ENCODE measurements at regions of chr1 and their contacts with region 1.

Region 1: DNA sequence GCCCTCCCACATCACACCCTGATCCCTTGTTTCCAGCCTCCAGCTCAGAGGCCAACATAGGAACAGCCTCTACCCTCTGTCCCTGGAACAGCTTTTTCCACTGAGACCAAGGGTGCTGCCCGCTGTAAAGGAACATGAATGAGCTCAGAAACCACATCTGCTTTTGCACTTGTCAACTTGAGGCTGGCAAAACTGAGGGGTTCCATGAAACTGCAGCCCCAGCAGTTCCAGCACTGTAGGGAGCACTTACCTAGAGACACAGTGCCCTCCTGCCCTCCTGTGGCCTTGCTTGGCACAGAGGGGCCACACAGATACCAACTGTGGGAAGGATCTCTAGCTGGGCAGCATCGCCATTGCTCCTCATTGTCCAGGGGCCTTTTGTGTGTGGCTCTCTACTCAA is 51.7 kb downstream of the ITPKB start:
- DNase-seq: peak; percentile 74
- H3K4me3 Mint-ChIP-seq: peak overlapping the region; percentile 27
- H3K27ac Mint-ChIP-seq: peak overlapping the region; percentile 100
- H3K4me1 Mint-ChIP-seq: peaks cover 100% of the 10 kb centered on the region
- H3K27me3 Mint-ChIP-seq: no peaks in the 10 kb centered on the region

Region 2: DNA sequence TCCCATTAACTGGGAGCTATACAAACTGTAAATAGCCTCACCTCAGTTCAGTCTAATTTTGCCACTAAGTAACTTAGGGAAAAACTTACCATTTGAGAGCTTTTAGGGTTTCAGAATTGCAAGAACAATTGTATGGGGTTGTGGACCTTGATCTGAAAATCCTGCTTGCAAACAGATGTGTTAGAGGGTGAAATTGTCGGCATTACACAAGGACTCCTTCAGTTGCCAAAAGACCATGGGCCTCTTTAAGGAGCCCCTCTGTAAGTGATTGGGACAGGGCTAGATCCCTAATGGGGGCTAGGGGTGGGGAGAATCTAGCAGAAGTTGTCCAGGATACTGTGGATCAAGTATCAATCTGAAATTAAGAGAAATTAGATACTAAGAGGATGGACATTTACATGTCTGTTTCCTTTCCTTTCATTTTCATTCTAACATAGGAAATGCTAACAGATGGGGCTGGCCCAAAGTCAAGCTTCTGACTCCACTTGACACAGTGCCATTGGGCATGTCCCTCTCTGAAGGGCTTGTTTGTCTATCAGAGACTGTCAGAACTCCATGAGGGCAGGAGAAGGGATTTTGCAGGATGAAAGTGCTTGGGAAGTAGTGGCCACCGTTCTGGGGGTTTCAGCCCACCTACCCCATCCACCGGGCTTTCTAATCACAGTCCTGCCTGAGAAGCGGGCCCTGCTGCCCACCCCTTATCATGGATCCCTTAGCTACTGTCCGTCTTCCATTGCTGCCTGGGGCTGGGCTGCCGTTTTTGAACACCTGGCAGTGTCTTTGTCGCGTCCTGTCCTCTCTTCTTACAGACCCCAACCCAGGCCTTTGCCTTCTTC is 84.2 kb before region 1 on chr1:
- CTCF ChIA-PET with region 1: no interaction called
- intact Hi-C with region 1: no loop called
- DNase-seq: peak; percentile 30
- H3K4me3 Mint-ChIP-seq: no peak overlapping the region
- H3K27ac Mint-ChIP-seq: no peak overlapping the region
- H3K4me1 Mint-ChIP-seq: no peaks in the 10 kb centered on the region
- H3K27me3 Mint-ChIP-seq: no peaks in the 10 kb centered on the region

Region 3: DNA sequence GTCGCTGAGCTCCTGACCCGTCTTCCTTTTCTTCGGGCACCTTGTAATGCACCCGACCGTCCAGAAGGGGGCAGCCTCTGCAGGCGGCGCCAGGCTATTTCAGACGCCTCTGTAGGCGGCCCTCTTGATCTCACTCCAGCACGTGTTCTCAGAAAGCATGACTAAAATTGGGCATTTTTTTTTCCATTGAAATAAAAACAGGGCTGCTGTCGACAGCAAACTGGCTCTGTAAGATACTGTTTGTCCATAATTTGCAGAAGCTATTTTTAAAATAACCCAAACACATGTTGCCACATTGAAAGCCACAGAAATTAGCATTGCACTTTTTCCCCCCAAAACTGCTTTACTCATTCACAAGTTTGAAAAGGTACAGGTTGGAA is 60.9 kb before region 1 on chr1:
- CTCF ChIA-PET with region 1: interaction called, 7 read pairs
- intact Hi-C with region 1: loop called (anchors 1 kb)
- DNase-seq: peak; percentile 90
- H3K4me3 Mint-ChIP-seq: peak overlapping the region; percentile 10
- H3K27ac Mint-ChIP-seq: peak overlapping the region; percentile 68
- H3K4me1 Mint-ChIP-seq: peaks cover 25% of the 10 kb centered on the region
- H3K27me3 Mint-ChIP-seq: no peaks in the 10 kb centered on the region

Region 4: GRCh38 chr1:226642876-226643576 is 44.4 kb before region 1 on chr1:
- CTCF ChIA-PET with region 1: interaction called, 11 read pairs
- intact Hi-C with region 1: no loop called
- DNase-seq: peak; percentile 80
- H3K4me3 Mint-ChIP-seq: peak overlapping the region; percentile 40
- H3K27ac Mint-ChIP-seq: peak overlapping the region; percentile 80
- H3K4me1 Mint-ChIP-seq: peaks cover 52% of the 10 kb centered on the region
- H3K27me3 Mint-ChIP-seq: no peaks in the 10 kb centered on the region

Region 5: GRCh38 chr1:226662642-226663326 is 24.6 kb before region 1 on chr1:
- CTCF ChIA-PET with region 1: interaction called, 6 read pairs
- intact Hi-C with region 1: loop called (anchors 1 kb)
- DNase-seq: peak; percentile 95
- H3K4me3 Mint-ChIP-seq: peak overlapping the region; percentile 43
- H3K27ac Mint-ChIP-seq: peak overlapping the region; percentile 82
- H3K4me1 Mint-ChIP-seq: peaks cover 100% of the 10 kb centered on the region
- H3K27me3 Mint-ChIP-seq: no peaks in the 10 kb centered on the region

Region 6: GRCh38 chr1:226731257-226731893 is 43.9 kb after region 1 on chr1:
- CTCF ChIA-PET with region 1: interaction called, 8 read pairs
- intact Hi-C with region 1: loop called (anchors 1 kb)
- DNase-seq: peak; percentile 47
- H3K4me3 Mint-ChIP-seq: peak overlapping the region; percentile 77
- H3K27ac Mint-ChIP-seq: peak overlapping the region; percentile 98
- H3K4me1 Mint-ChIP-seq: peaks cover 74% of the 10 kb centered on the region
- H3K27me3 Mint-ChIP-seq: no peaks in the 10 kb centered on the region

Region 7: GRCh38 chr1:226763905-226764264 is 76.5 kb after region 1 on chr1:
- CTCF ChIA-PET with region 1: no interaction called
- intact Hi-C with region 1: no loop called
- DNase-seq: peak; percentile 57
- H3K4me3 Mint-ChIP-seq: no peak overlapping the region
- H3K27ac Mint-ChIP-seq: peak overlapping the region; percentile 1
- H3K4me1 Mint-ChIP-seq: peaks cover 24% of the 10 kb centered on the region
- H3K27me3 Mint-ChIP-seq: no peaks in the 10 kb centered on the region

Region 8: DNA sequence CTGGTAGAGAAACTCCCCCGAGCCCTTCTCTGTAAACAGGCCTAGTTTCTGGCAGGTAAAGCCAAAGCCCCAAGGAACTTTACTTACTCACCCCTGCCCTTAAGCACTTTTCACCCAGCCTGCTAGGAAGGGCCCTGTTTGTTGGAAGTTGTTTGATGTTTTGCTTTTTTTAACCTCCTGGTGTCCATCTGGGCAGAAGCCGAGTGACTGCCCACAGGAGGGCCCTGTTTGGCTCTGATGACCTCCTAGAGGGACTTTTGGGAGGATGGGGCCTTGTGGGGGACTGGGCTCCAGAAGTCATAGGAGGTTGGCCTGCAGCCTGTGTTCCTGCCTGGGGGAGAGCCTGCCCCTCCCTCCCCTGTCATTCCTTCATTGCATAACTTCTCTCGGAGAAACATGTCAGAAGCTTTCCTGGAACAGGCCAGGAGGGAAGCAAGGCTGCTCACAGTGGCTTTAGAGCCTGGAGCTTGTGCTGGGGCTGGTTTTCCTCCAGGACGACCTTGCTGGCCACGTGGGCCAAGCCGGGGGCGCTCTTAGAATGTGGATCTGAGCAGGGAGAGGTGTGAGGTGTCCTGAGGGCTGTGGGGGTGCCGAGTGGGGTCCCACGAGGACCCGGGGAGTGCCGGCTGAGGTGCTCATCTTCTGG is 286.6 kb after region 1 on chr1:
- CTCF ChIA-PET with region 1: no interaction called
- intact Hi-C with region 1: no loop called
- DNase-seq: peak; percentile 2
- H3K4me3 Mint-ChIP-seq: no peak overlapping the region
- H3K27ac Mint-ChIP-seq: no peak overlapping the region
- H3K4me1 Mint-ChIP-seq: no peaks in the 10 kb centered on the region
- H3K27me3 Mint-ChIP-seq: no peaks in the 10 kb centered on the region

Measured in activated naive CD4-positive, alpha-beta T cell treated with anti-CD3 and anti-CD28 coated beads for 36 hours (primary cell).